Activated CD4-positive, alpha-beta memory T cell treated with anti-CD3 and anti-CD28 coated beads for 36 hours (primary cell): ENCODE measurements at regions of chr3 and their contacts with region 1.

Region 1: DNA sequence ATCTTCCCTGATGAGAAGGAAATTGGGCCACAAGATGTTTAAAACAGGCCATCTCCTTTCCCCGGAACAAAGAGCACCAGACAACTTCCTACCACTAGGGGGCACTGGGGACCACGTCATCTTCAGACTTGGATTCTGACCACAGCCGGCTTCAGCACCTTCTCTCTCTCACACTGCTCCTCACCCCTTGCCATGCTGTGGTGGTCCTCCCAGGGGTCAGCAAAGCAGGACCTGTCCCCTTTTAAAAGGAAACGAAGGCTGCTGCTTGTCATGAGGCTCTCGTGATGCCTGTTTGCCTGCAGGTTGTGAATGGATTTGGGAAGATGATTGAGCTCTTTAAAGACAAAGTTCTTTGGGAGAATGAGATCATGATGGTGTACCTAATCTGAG is 16.2 kb downstream of the RFT1 start:
- DNase-seq: peak; percentile 90
- H3K4me3 Mint-ChIP-seq: no peak overlapping the region
- H3K27ac Mint-ChIP-seq: no peak overlapping the region
- H3K4me1 Mint-ChIP-seq: peaks cover 17% of the 10 kb centered on the region
- H3K27me3 Mint-ChIP-seq: no peaks in the 10 kb centered on the region

Region 2: GRCh38 chr3:53102601-53103147 is 11.3 kb before region 1 on chr3:
- CTCF ChIA-PET with region 1: interaction called, 13 read pairs
- POLR2A ChIA-PET with region 1: interaction called, 3 read pairs
- intact Hi-C with region 1: loop called (anchors 1 kb)
- DNase-seq: peak; percentile 77
- H3K4me3 Mint-ChIP-seq: peak overlapping the region; percentile 38
- H3K27ac Mint-ChIP-seq: peak overlapping the region; percentile 83
- H3K4me1 Mint-ChIP-seq: peaks cover 60% of the 10 kb centered on the region
- H3K27me3 Mint-ChIP-seq: no peaks in the 10 kb centered on the region

Region 3: GRCh38 chr3:53160660-53161449 is 46.8 kb after region 1 on chr3 and contains the start of gene PRKCD:
- CTCF ChIA-PET with region 1: interaction called, 5 read pairs
- POLR2A ChIA-PET with region 1: no interaction called
- intact Hi-C with region 1: loop called (anchors 2 kb)
- DNase-seq: peak; percentile 85
- H3K4me3 Mint-ChIP-seq: peak within 1 kb of the TSS; percentile 78
- H3K27ac Mint-ChIP-seq: peak within 1 kb of the TSS; percentile 57
- H3K4me1 Mint-ChIP-seq: peaks cover 19% of the 10 kb centered on the region
- H3K27me3 Mint-ChIP-seq: peaks cover 15% of the 10 kb centered on the region
- total RNA-seq, gene PRKCD: 23.8 to 25.9 TPM

Region 4: GRCh38 chr3:53255775-53256703 is 142.0 kb after region 1 on chr3 and contains the start of gene TKT:
- CTCF ChIA-PET with region 1: interaction called, 3 read pairs
- POLR2A ChIA-PET with region 1: no interaction called
- intact Hi-C with region 1: loop called (anchors 5 kb)
- DNase-seq: peak; percentile 88
- H3K4me3 Mint-ChIP-seq: peak within 1 kb of the TSS; percentile 94
- H3K27ac Mint-ChIP-seq: peak within 1 kb of the TSS; percentile 78
- H3K4me1 Mint-ChIP-seq: peaks cover 27% of the 10 kb centered on the region
- H3K27me3 Mint-ChIP-seq: no peaks in the 10 kb centered on the region
- total RNA-seq, gene TKT: 252 to 254 TPM

Region 5: GRCh38 chr3:53544357-53544756 is 430.4 kb after region 1 on chr3:
- CTCF ChIA-PET with region 1: no interaction called
- POLR2A ChIA-PET with region 1: no interaction called
- intact Hi-C with region 1: no loop called
- DNase-seq: no peak
- H3K4me3 Mint-ChIP-seq: no peak overlapping the region
- H3K27ac Mint-ChIP-seq: no peak overlapping the region
- H3K4me1 Mint-ChIP-seq: peaks cover 3% of the 10 kb centered on the region
- H3K27me3 Mint-ChIP-seq: peaks cover 11% of the 10 kb centered on the region

Region 6: DNA sequence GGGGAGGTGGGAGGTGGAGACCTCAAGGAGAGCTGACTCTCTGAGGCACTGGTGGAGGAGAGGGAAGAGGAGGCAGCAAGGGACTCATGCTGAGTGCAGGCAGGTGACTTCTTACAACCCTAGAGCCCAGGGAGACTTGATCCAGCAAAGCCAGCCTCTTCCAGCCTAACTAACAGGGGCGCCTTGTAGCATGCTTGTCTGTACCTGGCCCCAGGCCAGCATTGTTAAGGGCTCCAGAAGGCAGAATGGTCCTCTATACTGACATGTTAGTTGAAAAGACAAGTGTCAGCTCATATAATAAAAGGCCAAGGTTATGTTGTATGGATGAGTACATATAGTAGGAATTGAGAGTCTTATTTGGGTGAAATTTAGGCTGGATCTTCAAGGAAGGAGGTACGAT is 666.8 kb after region 1 on chr3:
- CTCF ChIA-PET with region 1: no interaction called
- POLR2A ChIA-PET with region 1: no interaction called
- intact Hi-C with region 1: no loop called
- DNase-seq: no peak
- H3K4me3 Mint-ChIP-seq: no peak overlapping the region
- H3K27ac Mint-ChIP-seq: no peak overlapping the region
- H3K4me1 Mint-ChIP-seq: no peaks in the 10 kb centered on the region
- H3K27me3 Mint-ChIP-seq: no peaks in the 10 kb centered on the region

Region 7: GRCh38 chr3:53891497-53892285 is 777.7 kb after region 1 on chr3 and contains the start of gene SELENOK:
- CTCF ChIA-PET with region 1: no interaction called
- POLR2A ChIA-PET with region 1: no interaction called
- intact Hi-C with region 1: loop called (anchors 10 kb)
- DNase-seq: peak; percentile 99
- H3K4me3 Mint-ChIP-seq: peak within 1 kb of the TSS; percentile 91
- H3K27ac Mint-ChIP-seq: peak within 1 kb of the TSS; percentile 97
- H3K4me1 Mint-ChIP-seq: peaks cover 47% of the 10 kb centered on the region
- H3K27me3 Mint-ChIP-seq: no peaks in the 10 kb centered on the region
- total RNA-seq, gene SELENOK: 55.3 to 56.4 TPM